ENCODE measurements at regions of chr12 and their contacts with region 1.

Region 1: GRCh38 chr12:55743116-55743921 is at the start of gene GDF11:
- DNase-seq: peak; percentile 77
- ATAC-seq: peak; percentile 32
- total RNA-seq, gene GDF11: 6.0 TPM

Region 2: DNA sequence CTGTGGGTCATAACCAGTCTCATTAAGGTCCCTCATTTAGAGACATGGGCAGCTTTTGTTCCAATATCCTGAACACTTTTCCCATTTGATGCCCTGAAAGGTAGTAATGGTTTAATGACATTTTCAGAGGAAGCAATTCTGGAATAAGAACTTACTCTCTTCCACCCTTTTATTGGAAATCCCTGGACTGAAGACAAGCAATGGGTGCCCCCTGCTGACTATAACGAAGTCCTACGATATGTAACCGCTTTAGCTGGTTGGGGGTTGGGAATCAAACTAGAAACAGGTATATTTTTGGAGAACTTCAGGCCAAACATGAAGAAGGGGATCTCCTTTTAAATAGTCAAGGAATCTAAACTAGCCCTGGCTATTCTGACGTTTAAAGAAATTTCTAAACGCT is 53.7 kb after region 1 on chr12:
- intact Hi-C with region 1: loop called (anchors 10 kb)
- DNase-seq: no peak
- ATAC-seq: peak; percentile 63

Region 3: DNA sequence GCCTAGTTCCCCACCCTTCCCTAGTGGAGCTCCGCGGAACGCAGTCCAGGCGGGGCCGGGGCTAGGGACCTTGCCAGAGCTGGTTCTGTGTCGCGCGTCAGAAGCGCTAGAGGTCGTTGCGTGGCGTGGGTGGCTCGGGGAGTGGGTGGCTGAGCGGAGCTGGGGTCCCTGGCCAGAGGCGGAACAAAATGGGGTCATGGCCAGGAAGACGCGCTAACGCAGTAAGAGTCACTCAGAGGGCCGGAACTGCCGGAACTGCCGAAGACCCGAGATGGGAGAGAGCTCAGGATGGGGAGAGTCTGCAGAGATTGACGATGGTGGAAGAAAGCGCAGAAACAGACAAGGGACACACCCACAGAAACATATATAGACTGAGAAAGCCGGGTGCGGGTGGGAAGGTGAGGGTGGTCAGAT is 192.4 kb after region 1 on chr12:
- intact Hi-C with region 1: loop called (anchors 5 kb)
- DNase-seq: peak; percentile 64
- ATAC-seq: no peak

Measured in Right ventricle myocardium superior (tissue), 1 donor.